ENCODE measurements at regions of chr9 and their contacts with region 1.

Region 1: DNA sequence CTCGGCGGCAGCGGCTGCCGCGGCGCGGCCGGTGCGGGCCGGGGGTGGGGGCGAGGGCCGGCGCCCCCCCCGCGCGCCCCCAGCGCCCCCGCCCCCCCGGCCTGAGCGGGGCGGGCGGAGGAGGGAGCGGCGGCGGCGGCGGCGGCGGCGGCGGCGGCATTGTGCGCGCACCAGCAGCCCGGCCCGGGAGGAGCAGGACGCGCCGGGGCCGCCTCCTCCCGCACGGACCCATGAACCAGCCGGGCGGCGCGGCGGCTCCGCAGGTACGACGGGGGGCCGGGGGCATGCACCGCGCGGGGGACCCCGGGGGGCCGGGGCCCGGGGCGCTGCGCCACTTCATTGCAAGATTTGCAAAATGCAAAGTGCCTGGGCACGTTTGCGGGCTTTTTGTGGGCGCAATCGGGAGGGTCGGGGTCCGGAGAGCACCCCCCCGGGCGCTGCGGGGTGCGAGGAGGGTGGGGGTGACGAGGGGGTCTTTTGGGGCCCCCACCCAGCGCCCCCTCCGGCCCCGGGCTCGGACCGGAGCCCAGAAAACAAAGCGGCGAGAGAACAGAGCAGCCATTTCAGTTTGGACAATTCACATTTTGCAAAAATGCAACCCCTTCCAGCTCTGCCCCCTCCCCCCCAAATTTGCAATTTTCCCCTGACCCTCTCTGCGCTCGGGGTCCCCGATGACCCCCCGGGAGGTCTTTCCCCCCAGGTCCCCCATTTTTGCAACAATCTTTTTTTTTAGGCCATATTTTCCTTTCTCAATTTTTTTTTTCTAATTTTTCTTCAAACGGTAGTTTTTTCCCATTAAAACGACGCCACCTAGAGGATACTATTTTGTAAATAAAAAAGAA is at the start of gene ZNF618:
- DNase-seq: peak; percentile 47
- ATAC-seq: peak; percentile 84 to 85
- total RNA-seq, gene ZNF618: 4.0 to 4.1 TPM

Region 2: GRCh38 chr9:113737517-113738271 is 138.7 kb before region 1 on chr9:
- intact Hi-C with region 1: no loop called
- DNase-seq: no peak
- ATAC-seq: no peak

Region 3: DNA sequence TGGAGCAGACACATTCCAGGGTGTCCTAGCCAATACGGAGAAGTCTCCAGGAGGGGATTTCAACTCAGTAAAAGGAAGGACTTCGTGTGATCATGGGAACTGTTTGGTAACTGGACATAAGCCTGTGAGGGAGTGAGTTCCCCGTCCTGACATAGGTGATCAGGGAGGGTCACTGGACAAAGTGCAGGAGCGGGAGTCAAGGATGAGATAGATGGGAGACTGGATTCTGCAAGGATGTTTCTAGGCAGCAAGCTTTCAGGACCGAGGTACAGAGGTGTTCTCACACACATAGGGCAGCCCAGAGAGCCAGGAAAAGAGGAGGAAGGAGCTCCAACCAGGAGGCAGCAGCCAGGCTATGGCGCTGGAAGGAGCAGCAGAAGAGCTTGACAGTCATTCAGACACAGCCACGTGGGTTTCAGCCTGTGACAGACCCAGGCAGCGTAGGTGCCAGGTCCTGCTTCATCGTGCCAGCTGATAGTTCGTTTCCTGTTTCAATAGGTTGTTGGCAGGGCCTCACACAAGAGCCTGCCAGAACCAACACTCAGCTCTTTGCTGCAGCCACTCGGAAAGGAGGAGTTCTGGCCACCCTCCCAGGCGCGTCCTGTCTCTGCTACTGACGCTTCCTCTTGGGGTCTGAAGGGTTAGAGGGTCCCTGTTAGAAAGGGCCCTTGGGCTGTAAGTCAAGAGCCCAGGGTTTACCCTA is 117.6 kb after region 1 on chr9:
- intact Hi-C with region 1: loop called in 1 of 2 experiments (anchors 10 kb)
- DNase-seq: peak; percentile 94
- ATAC-seq: peak; percentile 89 to 90

Measured in left cardiac atrium (tissue), 4 donors.